ENCODE measurements at regions of chr19 and their contacts with region 1.

Region 1: DNA sequence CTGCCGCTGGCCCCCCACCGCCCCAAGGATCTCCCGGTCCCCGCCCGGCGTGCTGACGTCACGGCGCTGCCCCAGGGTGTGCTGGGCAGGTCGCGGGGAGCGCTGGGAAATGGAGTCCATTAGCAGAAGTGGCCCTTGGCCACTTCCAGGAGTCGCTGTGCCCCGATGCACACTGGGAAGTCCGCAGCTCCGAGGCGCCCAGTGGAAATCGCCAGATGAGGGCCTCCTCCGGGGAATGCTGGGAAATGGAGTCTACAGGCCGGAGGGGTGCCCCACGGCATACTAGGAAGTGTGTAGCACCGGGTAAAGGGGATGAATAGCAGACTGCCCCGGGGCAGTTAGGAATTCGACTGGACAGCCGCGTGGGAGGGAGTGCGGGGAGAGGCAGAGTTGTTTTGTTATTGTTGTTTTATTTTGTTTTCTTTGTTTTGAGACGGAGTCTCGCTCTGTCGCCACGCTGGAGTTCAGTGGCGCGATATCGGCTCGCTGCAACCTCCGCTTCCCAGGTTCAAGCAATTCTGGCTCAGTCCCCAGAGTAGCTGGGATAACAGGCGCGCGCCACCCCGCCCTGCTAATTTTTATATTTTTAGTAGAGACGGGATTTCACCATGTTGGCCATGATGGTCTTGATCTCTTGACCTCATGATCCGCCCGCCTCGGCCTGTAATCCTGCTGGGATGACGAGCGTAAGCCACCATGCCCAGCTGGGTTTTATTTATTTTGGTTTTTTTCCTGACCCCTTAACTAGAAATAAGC is at the start of gene PPP1R12C:
- DNase-seq: peak; percentile 98 to 100
- H3K4me3 ChIP-seq: peak within 1 kb of the TSS; percentile 76 to 81
- H3K27ac ChIP-seq: peak within 1 kb of the TSS; percentile 79 to 87
- H3K4me1 ChIP-seq: peaks cover 13 to 37% of the 10 kb centered on the region in 2 donors
- H3K27me3 ChIP-seq: no peaks in the 10 kb centered on the region
- CTCF ChIP-seq: no peak
- total RNA-seq, gene PPP1R12C: 219 TPM

Region 2: DNA sequence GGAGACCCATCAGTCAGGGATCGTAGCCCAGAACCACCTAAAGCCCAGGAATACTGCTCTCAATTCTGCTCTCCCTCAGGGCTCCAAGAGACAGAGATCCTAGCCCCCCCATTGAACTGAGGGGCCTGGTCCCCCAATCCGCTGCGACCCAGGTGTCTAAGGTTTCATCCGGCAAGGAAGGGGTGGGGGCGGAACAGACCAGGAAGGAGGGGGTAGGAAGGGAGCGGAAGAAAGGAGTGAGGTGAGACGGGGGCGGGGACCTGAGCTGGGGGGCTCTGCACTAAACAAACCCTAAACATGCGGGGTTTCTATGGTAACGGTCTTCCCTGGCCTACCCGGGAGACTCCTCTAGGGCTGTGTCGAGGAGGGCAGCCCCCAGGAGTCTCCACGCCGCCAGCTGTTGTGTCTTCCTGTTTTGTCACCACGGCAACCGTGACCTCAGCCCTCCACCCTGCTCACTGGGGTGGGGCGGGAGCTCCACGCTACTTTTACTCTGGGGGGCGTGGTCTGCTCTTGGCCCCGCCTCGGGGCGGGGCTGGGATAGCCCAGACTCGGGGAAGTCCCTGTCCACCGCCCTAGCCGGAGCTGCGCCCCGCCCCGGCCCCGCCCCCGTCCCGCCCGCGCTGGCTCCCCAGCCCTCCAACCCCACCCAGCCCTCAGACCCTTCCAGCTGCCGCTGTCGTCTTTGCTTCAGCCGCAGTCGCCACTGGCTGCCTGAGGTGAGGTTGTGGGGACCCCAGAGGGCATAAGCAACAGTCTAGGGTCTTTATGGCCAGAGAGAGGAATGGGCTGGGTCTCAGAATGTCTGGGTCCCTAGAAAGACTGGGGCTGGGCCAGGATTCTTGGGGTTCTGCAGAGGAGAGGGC is 1250.4 kb before region 1 on chr19 and contains the start of gene MYADM:
- intact Hi-C with region 1: loop called (anchors 10 kb)
- DNase-seq: peak; percentile 99 to 100
- H3K4me3 ChIP-seq: peak within 1 kb of the TSS; percentile 86
- H3K27ac ChIP-seq: peak within 1 kb of the TSS; percentile 98 to 99
- H3K4me1 ChIP-seq: peaks cover 3 to 28% of the 10 kb centered on the region in 2 donors
- H3K27me3 ChIP-seq: no peaks in the 10 kb centered on the region
- CTCF ChIP-seq: no peak
- total RNA-seq, gene MYADM: 422 TPM

Region 3: GRCh38 chr19:55062734-55063492 is 54.9 kb before region 1 on chr19 and contains the start of gene RDH13:
- intact Hi-C with region 1: loop called (anchors 2 kb)
- DNase-seq: peak; percentile 78 to 97
- H3K4me3 ChIP-seq: peak within 1 kb of the TSS; percentile 76 to 79
- H3K27ac ChIP-seq: peak within 1 kb of the TSS; percentile 19 to 72
- H3K4me1 ChIP-seq: peaks cover 0 to 4% of the 10 kb centered on the region in 2 donors
- H3K27me3 ChIP-seq: no peaks in the 10 kb centered on the region
- CTCF ChIP-seq: no peak
- total RNA-seq, gene RDH13: 12.1 TPM

Region 4: DNA sequence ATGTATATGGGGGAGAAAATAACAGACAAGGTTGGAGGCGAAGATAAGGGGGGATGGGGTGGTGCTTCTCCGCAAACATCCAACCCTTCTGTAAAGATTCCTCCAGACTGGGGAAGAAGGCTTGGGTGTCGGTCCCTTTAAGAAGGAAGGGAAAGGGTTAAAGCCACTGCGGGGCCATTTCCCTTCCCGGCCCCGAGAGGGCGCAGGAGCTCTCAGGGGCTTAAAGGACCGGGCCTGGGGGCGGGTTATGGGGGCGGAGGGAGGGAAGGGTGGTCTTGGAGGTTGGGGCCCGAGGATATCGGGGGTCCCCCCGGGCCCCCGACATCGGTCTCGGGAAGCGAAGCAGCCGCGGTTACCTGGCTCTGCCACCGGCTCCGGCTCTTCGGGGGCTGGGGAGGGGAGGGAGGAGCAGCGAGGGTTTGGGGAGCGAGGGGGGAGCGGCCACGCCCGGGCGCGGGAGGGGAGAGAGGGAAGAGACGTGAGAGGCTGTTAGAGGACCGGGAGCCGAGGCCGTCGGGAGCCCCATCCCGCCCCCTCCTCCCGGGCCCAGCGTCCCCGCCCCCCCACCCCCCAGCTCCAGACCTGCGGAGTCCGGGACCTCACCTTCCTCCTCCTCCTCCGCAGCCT is 28.4 kb after region 1 on chr19:
- intact Hi-C with region 1: no loop called
- DNase-seq: no peak
- H3K4me3 ChIP-seq: no peak overlapping the region
- H3K27ac ChIP-seq: no peak overlapping the region
- H3K4me1 ChIP-seq: peaks cover 0 to 4% of the 10 kb centered on the region in 2 donors
- H3K27me3 ChIP-seq: peaks cover 17% of the 10 kb centered on the region
- CTCF ChIP-seq: peak in 1 of 3 experiments; percentile 11

Region 5: DNA sequence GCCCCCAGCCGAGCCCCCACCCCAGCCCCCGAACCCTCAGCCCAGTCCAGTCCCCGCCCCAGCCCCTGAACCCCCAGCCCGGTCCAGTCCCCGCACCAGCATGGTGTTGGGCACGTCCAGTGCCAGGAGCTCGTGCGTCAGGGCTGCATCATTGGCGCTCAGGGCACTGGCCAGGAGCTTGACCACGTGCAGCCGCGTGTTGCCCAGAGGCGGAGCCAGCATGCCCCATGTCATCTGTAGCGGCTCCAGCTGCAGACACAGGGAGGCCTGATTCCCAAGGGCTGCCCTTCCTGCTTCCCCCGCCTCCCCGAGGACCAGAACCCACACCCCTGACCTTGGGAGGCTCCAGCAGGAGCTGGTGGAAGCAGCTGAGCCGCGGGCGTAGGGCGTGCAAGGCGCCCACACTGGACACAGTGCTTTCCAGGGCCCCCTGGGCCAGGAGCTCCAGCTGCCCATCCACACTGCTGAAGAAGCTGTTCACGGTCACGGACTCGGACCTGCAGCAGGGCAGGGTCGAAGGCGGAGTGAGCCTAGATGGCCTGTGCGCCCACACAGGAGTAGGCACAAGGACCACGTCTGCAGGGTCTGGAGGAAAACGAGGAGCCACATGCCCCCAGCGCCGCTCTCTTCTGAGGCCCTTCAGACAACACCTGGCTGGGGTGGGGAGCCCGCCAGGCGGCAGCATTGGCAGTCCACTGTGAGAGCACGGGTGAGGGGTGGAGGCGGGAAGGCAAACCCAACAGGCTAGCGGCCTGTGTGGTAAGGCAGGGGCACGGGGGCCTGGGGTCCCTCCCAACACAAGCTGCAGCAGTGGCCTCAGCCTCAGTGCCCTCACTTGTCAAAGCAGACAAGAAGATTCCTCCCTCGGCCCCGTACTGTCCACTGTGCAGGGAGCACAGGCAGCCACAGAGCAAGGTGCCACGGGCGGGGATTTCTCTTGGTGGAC is 123.6 kb after region 1 on chr19:
- intact Hi-C with region 1: no loop called
- DNase-seq: no peak
- H3K4me3 ChIP-seq: no peak overlapping the region
- H3K27ac ChIP-seq: no peak overlapping the region
- H3K4me1 ChIP-seq: no peaks in the 10 kb centered on the region
- H3K27me3 ChIP-seq: no peaks in the 10 kb centered on the region
- CTCF ChIP-seq: no peak

Region 6: GRCh38 chr19:55279770-55280643 is 162.2 kb after region 1 on chr19 and contains the start of gene HSPBP1:
- intact Hi-C with region 1: loop called (anchors 5 kb)
- DNase-seq: peak; percentile 85 to 97
- H3K4me3 ChIP-seq: peak within 1 kb of the TSS; percentile 71 to 84
- H3K27ac ChIP-seq: peak within 1 kb of the TSS; percentile 66 to 68
- H3K4me1 ChIP-seq: peaks cover 11 to 16% of the 10 kb centered on the region in 2 donors
- H3K27me3 ChIP-seq: no peaks in the 10 kb centered on the region
- CTCF ChIP-seq: no peak
- total RNA-seq, gene HSPBP1: 72.7 TPM

Region 7: GRCh38 chr19:55461259-55461973 is 343.6 kb after region 1 on chr19 and contains the start of gene ISOC2:
- intact Hi-C with region 1: loop called (anchors 2 kb)
- DNase-seq: peak; percentile 100
- H3K4me3 ChIP-seq: peak within 1 kb of the TSS; percentile 58 to 77
- H3K27ac ChIP-seq: peak within 1 kb of the TSS; percentile 67 to 79
- H3K4me1 ChIP-seq: peaks cover 0 to 5% of the 10 kb centered on the region in 2 donors
- H3K27me3 ChIP-seq: no peaks in the 10 kb centered on the region
- CTCF ChIP-seq: no peak
- total RNA-seq, gene ISOC2: 96.7 TPM

Region 8: DNA sequence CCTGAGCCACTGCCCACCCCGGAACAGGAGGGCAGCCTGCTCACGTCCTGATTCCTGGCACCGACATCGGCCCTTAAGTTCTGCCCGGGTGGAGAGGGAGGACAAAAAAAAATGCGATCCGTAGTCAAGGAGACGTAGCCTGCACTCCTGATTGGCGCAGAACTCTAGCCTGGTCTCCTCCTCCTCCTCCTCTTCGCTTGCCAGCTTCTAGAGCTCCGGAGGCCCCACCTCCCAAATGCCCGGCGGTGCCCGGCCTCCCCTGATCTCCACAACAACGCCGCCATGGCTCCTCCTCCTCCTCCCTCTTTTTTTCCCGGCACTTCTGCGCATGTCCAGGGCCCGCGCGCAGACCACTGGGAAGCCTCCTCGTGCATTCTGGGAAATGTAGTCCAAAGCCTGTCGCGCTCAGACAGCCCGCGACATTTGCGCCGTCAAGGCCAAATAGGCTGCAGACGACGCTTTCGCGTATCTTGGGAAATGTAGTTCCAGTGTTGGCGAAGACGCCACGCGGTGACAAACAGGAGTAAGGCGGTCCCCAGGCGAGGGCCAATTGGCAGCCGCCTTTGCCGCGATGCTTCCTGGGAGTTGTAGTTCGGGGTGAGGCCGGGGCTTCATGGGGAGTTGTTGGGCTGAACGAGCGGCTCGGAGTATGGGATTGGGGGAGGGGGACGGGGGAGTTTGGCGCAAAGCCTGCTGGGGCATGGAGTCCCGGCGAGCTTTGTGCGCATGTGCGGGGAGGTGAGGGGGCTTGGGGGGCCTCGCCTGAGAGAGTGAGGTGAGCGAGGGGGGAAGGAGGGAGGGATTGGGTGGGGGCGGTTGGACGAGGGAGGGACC is 1023.0 kb after region 1 on chr19 and contains the start of gene ZNF444:
- intact Hi-C with region 1: loop called (anchors 10 kb)
- DNase-seq: peak; percentile 98 to 99
- H3K4me3 ChIP-seq: peak within 1 kb of the TSS; percentile 61 to 82
- H3K27ac ChIP-seq: peak within 1 kb of the TSS; percentile 82 to 93
- H3K4me1 ChIP-seq: peaks cover 0 to 15% of the 10 kb centered on the region in 2 donors
- H3K27me3 ChIP-seq: no peaks in the 10 kb centered on the region
- CTCF ChIP-seq: no peak
- total RNA-seq, gene ZNF444: 94.9 TPM